PC-3 (cell line): ENCODE measurements at regions of chr1 and their contacts with region 1.

Region 1: GRCh38 chr1:150235852-150236613 is at the start of gene ANP32E:
- DNase-seq: peak; percentile 100
- ATAC-seq: peak; percentile 89
- H3K4me3 ChIP-seq: peak within 1 kb of the TSS; percentile 77
- H3K27ac ChIP-seq: peak within 1 kb of the TSS; percentile 80
- H3K4me1 ChIP-seq: peaks cover 22% of the 10 kb centered on the region
- H3K27me3 ChIP-seq: no peaks in the 10 kb centered on the region
- CTCF ChIP-seq: no peak; the same call in 1 of the 2 replicates
- total RNA-seq, gene ANP32E: 42.0 and 47.4 TPM in 2 replicates

Region 2: GRCh38 chr1:150192012-150192411 is 44.0 kb before region 1 on chr1:
- CTCF ChIA-PET with region 1: no interaction called
- POLR2A ChIA-PET with region 1: no interaction called
- intact Hi-C with region 1: loop called (anchors 1 kb)
- DNase-seq: peak; percentile 93
- ATAC-seq: peak; percentile 95
- H3K4me3 ChIP-seq: no peak overlapping the region
- H3K27ac ChIP-seq: no peak overlapping the region
- H3K4me1 ChIP-seq: peaks cover 14% of the 10 kb centered on the region
- H3K27me3 ChIP-seq: no peaks in the 10 kb centered on the region
- CTCF ChIP-seq: no peak

Region 3: DNA sequence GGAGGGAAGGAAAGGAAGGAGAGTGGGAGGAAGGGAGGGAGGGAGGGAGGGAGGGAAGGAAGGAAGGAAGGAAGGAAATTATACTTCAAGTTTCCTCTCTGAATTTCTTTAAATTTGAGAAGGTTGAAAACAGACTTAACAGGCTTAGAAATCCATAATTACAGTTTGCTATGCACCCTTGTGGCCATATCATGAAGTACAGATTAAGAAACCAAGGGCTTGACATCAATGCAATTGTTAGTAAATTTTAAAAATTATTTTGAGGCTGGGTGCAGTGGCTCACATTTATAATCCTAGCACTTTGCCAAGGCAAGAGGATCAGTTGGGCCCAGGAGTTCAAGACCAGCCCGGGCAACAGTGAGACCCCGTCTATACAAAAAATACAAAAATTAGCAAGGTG is 14.5 kb before region 1 on chr1:
- CTCF ChIA-PET with region 1: no interaction called
- POLR2A ChIA-PET with region 1: no interaction called
- intact Hi-C with region 1: no loop called
- DNase-seq: peak; percentile 64
- ATAC-seq: peak; percentile 62
- H3K4me3 ChIP-seq: no peak overlapping the region
- H3K27ac ChIP-seq: no peak overlapping the region
- H3K4me1 ChIP-seq: no peaks in the 10 kb centered on the region
- H3K27me3 ChIP-seq: no peaks in the 10 kb centered on the region
- CTCF ChIP-seq: peak; percentile 67